Activated naive CD4-positive, alpha-beta T cell treated with anti-CD3 and anti-CD28 coated beads for 36 hours (primary cell): ENCODE measurements at regions of chr12 and their contacts with region 1.

Region 1: DNA sequence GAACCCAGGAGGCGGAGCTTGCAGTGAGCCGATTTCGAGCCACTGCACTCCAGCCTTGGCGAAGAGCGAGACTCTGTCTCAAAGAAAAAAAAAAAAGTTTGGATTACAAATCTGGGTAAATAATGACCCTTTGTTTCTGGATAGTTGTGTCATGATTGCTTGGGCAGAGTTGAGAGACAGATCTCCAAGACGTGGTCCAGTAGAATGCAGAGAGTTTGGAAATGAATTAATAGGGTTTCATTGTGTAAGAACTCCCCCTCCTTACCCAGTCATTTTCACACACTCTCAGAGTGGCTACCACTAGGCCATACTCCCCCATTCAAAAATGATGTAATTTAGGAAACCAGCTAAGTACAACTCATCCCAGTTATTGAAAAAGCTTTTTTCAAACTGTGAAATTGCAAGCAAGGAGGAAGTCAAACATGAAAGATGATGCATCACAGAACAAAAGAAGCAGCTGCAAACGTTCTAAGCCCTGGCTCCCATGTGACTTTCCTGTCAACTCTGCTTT is 1331.9 kb downstream of the AACS start:
- DNase-seq: peak; percentile 22
- H3K4me3 Mint-ChIP-seq: no peak overlapping the region
- H3K27ac Mint-ChIP-seq: no peak overlapping the region
- H3K4me1 Mint-ChIP-seq: peaks cover 11% of the 10 kb centered on the region
- H3K27me3 Mint-ChIP-seq: no peaks in the 10 kb centered on the region

Region 2: DNA sequence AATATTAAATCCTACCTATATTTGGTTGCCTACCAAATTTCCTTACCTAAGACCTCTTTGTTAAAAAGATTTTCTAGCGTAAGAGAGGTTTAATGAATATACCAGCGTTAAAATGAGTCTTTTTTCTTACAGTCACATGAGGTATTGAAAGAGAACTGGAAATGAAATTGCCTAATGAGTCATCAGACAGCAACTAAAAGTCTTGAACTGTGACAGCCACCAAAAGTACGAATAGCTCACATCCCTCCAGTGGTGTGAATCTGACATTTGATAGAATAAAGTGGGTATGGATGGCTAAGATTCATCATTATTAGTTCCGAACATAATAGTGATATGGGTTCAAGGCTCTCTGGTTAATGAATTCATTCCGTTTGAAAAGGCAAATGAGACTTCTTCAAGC is 34.6 kb before region 1 on chr12:
- CTCF ChIA-PET with region 1: no interaction called
- intact Hi-C with region 1: loop called (anchors 1 kb)
- DNase-seq: no peak
- H3K4me3 Mint-ChIP-seq: no peak overlapping the region
- H3K27ac Mint-ChIP-seq: no peak overlapping the region
- H3K4me1 Mint-ChIP-seq: no peaks in the 10 kb centered on the region
- H3K27me3 Mint-ChIP-seq: no peaks in the 10 kb centered on the region

Region 3: GRCh38 chr12:126483145-126484068 is 86.3 kb after region 1 on chr12:
- CTCF ChIA-PET with region 1: no interaction called
- intact Hi-C with region 1: loop called (anchors 1 kb)
- DNase-seq: no peak
- H3K4me3 Mint-ChIP-seq: no peak overlapping the region
- H3K27ac Mint-ChIP-seq: no peak overlapping the region
- H3K4me1 Mint-ChIP-seq: peaks cover 6% of the 10 kb centered on the region
- H3K27me3 Mint-ChIP-seq: no peaks in the 10 kb centered on the region